MCF 10A (cell line): ENCODE measurements at regions of chr20 and their contacts with region 1.

Region 1: DNA sequence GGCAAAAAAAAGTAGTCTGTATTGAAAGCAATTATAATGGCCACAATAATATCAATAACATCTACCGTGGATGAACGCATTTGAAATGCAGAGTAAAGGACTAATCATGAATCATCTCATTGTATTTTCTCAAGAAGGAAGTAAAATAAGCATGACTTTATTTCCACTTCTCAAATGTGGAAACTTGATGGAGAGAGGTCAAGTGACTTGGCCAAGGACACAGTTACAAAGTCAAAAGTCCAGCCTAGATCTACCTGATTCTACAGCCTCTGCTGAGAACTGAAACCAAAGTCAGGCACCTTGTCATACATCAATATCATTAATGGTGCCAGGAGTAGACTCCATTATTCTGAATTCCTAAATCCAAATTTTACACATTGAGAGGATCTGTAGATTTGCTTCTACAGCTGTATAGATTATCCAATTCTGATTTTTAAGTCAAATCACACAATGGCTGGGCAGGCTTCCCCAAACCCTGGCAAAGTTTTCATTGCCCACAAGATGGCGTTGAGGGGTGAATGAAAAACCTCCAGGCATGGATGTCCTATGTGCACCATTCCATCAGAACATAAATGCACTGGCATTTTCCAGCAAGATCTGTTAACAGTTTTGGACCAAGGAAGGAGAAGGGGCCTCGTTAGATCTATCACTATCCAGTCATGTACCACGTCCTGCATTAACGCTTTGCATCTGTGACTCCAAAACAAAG is 423.1 kb downstream of the MAFB start:
- DNase-seq: peak; percentile 75
- H3K4me3 Mint-ChIP-seq: no peak overlapping the region
- H3K27ac Mint-ChIP-seq: no peak overlapping the region
- H3K4me1 Mint-ChIP-seq: peaks cover 4% of the 10 kb centered on the region
- H3K27me3 Mint-ChIP-seq: no peaks in the 10 kb centered on the region
- CTCF ChIP-seq: peak; percentile 51

Region 2: GRCh38 chr20:39935901-39936300 is 330.1 kb before region 1 on chr20:
- CTCF ChIA-PET with region 1: no interaction called
- POLR2A ChIA-PET with region 1: no interaction called
- intact Hi-C with region 1: no loop called
- DNase-seq: no peak
- H3K4me3 Mint-ChIP-seq: no peak overlapping the region
- H3K27ac Mint-ChIP-seq: no peak overlapping the region
- H3K4me1 Mint-ChIP-seq: no peaks in the 10 kb centered on the region
- H3K27me3 Mint-ChIP-seq: peaks cover 25% of the 10 kb centered on the region
- CTCF ChIP-seq: no peak

Region 3: GRCh38 chr20:40090236-40090635 is 175.7 kb before region 1 on chr20:
- CTCF ChIA-PET with region 1: no interaction called
- POLR2A ChIA-PET with region 1: no interaction called
- intact Hi-C with region 1: no loop called
- DNase-seq: peak; percentile 42
- H3K4me3 Mint-ChIP-seq: no peak overlapping the region
- H3K27ac Mint-ChIP-seq: no peak overlapping the region
- H3K4me1 Mint-ChIP-seq: no peaks in the 10 kb centered on the region
- H3K27me3 Mint-ChIP-seq: no peaks in the 10 kb centered on the region
- CTCF ChIP-seq: no peak

Region 4: GRCh38 chr20:40279390-40279789 is 13.4 kb after region 1 on chr20:
- CTCF ChIA-PET with region 1: interaction called, 54 read pairs
- POLR2A ChIA-PET with region 1: interaction called, 11 read pairs
- intact Hi-C with region 1: no loop called
- DNase-seq: peak; percentile 84
- H3K4me3 Mint-ChIP-seq: no peak overlapping the region
- H3K27ac Mint-ChIP-seq: peak overlapping the region; percentile 84
- H3K4me1 Mint-ChIP-seq: peaks cover 28% of the 10 kb centered on the region
- H3K27me3 Mint-ChIP-seq: no peaks in the 10 kb centered on the region
- CTCF ChIP-seq: no peak

Region 5: DNA sequence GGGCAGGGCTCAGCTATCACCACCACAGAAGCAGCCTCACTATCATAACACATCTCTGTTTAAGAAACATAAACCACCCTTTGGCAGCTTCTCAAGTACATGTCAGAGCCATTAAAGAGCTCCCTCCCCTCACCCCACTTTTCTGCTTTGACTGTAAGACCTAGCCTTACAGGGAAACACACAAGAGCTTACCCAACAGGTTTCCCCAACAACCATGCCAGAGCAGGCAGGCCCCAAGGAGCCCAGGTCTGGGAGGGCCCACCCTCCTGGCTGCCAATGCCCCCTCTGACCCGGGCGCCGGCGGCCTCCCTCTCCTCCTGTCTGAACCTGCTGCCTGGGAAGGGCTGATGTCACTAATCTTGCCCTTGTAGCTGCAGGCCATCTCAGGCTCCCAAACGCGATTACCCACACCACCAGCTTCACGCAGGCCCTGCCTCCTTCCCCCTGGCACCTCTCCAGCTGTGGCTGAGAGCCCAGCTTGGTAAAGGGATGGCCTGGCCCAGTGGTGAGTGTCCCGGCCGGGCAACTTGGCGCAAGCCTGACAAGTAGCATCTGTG is 21.1 kb after region 1 on chr20:
- CTCF ChIA-PET with region 1: interaction called, 38 read pairs
- POLR2A ChIA-PET with region 1: interaction called, 13 read pairs
- intact Hi-C with region 1: no loop called
- DNase-seq: peak; percentile 98
- H3K4me3 Mint-ChIP-seq: peak overlapping the region; percentile 40
- H3K27ac Mint-ChIP-seq: peak overlapping the region; percentile 92
- H3K4me1 Mint-ChIP-seq: peaks cover 36% of the 10 kb centered on the region
- H3K27me3 Mint-ChIP-seq: no peaks in the 10 kb centered on the region
- CTCF ChIP-seq: no peak

Region 6: GRCh38 chr20:40471261-40471629 is 205.3 kb after region 1 on chr20:
- CTCF ChIA-PET with region 1: interaction called, 3 read pairs
- POLR2A ChIA-PET with region 1: no interaction called
- intact Hi-C with region 1: loop called (anchors 1 kb)
- DNase-seq: peak; percentile 54
- H3K4me3 Mint-ChIP-seq: no peak overlapping the region
- H3K27ac Mint-ChIP-seq: no peak overlapping the region
- H3K4me1 Mint-ChIP-seq: no peaks in the 10 kb centered on the region
- H3K27me3 Mint-ChIP-seq: no peaks in the 10 kb centered on the region
- CTCF ChIP-seq: no peak

Region 7: DNA sequence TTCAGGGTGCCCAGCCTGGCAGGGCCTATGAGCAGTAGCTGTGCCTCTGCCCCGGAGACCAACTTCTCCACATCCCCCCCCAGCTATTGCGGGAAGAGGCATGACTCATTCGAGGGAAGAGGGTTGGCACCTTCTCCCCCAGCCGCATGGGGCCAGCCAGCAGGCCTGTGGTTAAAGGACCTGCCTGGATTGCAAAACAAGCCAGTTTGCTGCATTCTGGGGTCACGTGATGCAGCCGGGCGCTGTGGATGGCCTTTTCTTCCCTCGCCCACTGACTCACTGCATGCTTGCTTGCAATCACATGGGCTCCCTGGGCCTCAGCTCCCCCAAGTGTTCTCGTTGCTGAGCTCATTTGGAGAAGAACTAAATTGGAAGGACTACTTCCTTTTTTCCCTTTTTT is 240.6 kb after region 1 on chr20:
- CTCF ChIA-PET with region 1: interaction called, 4 read pairs
- POLR2A ChIA-PET with region 1: interaction called, 3 read pairs
- intact Hi-C with region 1: loop called (anchors 10 kb)
- DNase-seq: peak; percentile 99
- H3K4me3 Mint-ChIP-seq: no peak overlapping the region
- H3K27ac Mint-ChIP-seq: peak overlapping the region; percentile 74
- H3K4me1 Mint-ChIP-seq: peaks cover 41% of the 10 kb centered on the region
- H3K27me3 Mint-ChIP-seq: no peaks in the 10 kb centered on the region
- CTCF ChIP-seq: no peak

Region 8: GRCh38 chr20:40532103-40532502 is 266.1 kb after region 1 on chr20:
- CTCF ChIA-PET with region 1: interaction called, 4 read pairs
- POLR2A ChIA-PET with region 1: interaction called, 3 read pairs
- intact Hi-C with region 1: loop called (anchors 1 kb)
- DNase-seq: peak; percentile 66
- H3K4me3 Mint-ChIP-seq: no peak overlapping the region
- H3K27ac Mint-ChIP-seq: no peak overlapping the region
- H3K4me1 Mint-ChIP-seq: peaks cover 9% of the 10 kb centered on the region
- H3K27me3 Mint-ChIP-seq: no peaks in the 10 kb centered on the region
- CTCF ChIP-seq: peak; percentile 39

Region 9: DNA sequence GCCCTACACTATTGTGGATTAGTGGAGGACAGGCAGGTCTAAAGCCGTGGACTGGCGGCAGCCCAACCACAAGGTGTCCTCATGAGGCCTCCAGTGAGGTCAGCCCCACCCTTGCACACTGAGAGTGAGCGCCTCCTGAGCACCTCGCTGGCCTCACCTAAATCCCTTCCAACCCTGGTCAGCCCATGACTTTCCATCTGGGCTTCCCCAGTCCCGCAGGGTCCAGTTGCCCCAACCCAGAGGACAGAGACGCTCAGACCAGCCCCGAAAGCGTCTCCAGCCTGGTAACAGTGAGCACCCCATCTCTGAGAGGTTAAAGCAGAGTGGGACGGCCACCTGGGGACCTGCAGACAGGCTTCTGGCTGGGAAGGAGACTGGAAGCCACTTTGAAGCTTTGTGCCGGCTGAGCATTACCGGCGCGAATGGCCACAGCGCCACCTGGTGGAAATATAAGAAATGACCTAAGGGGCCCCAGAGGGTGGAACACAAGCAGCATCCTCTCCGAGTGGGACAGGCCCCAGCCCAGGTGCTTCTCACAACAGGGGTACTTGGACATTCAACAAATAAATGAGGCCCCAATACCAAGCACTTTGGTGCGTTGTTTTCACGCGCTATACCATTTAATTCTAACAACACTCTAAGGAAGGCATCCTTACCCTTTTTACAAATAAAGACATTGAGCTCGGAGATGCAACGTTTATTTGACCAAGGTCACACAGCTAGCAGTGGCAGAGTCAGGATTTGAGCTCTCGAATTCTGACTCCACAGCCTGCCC is 696.9 kb after region 1 on chr20:
- CTCF ChIA-PET with region 1: interaction called, 4 read pairs
- POLR2A ChIA-PET with region 1: no interaction called
- intact Hi-C with region 1: loop called (anchors 1 kb)
- DNase-seq: peak; percentile 71
- H3K4me3 Mint-ChIP-seq: no peak overlapping the region
- H3K27ac Mint-ChIP-seq: no peak overlapping the region
- H3K4me1 Mint-ChIP-seq: peaks cover 20% of the 10 kb centered on the region
- H3K27me3 Mint-ChIP-seq: no peaks in the 10 kb centered on the region
- CTCF ChIP-seq: peak; percentile 84